GM12878 (cell line): ENCODE measurements at regions of chr2 and their contacts with region 1.

Region 1: GRCh38 chr2:179049546-179050311 is at the start of gene CCDC141:
- DNase-seq: peak; percentile 37
- ATAC-seq: peak; percentile 77
- H3K4me3 ChIP-seq: peak within 1 kb of the TSS; percentile 68
- H3K27ac ChIP-seq: peak within 1 kb of the TSS; percentile 69
- H3K4me1 ChIP-seq: peaks cover 31% of the 10 kb centered on the region
- H3K27me3 ChIP-seq: no peaks in the 10 kb centered on the region
- CTCF ChIP-seq: no peak
- EP300 ChIP-seq: 0 out of 4 replicates have a peak, but pooled peaks of 1 of the 2 experiments have one; percentile 15
- POLR2A ChIP-seq: peak; percentile 35; the same call in 1 of the 2 replicates
- RAD21 ChIP-seq: no peak
- polyA plus RNA-seq, gene CCDC141: 0.84 to 2.1 TPM

Region 2: GRCh38 chr2:179037807-179038206 is 11.9 kb before region 1 on chr2:
- CTCF ChIA-PET with region 1: interaction called, 22 read pairs
- POLR2A ChIA-PET with region 1: interaction called, 9 read pairs
- RAD21 ChIA-PET with region 1: interaction called, 14 read pairs
- SMC1A ChIA-PET with region 1: interaction called, 28 read pairs
- in situ Hi-C with region 1: no loop called
- intact Hi-C with region 1: no loop called
- DNase-seq: no peak
- ATAC-seq: peak; percentile 69
- H3K4me3 ChIP-seq: no peak overlapping the region
- H3K27ac ChIP-seq: no peak overlapping the region
- H3K4me1 ChIP-seq: peaks cover 19% of the 10 kb centered on the region
- H3K27me3 ChIP-seq: no peaks in the 10 kb centered on the region
- CTCF ChIP-seq: no peak
- EP300 ChIP-seq: no peak; a peak in 1 of 4 replicates
- POLR2A ChIP-seq: no peak
- RAD21 ChIP-seq: no peak

Region 3: DNA sequence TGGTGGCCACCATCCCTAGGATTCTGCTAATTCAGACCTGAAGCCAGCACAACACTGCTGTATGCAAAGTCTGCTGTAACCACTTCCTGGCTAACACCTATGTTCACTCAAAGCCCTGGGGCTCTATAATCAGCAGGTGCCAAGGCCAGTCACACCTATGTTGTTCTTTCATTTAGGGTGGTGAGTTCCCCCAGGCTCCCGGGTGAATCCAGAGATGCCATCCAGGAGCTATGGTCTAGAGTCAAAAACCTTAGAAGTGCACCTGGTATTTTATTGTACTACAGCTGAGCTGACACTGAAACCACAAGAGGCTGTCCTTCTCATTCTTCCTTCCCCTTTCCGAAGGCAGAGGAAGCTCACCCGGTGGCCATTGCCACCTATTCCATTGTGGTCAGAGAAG is 46.4 kb after region 1 on chr2:
- CTCF ChIA-PET with region 1: interaction called, 6 read pairs
- POLR2A ChIA-PET with region 1: interaction called, 8 read pairs
- RAD21 ChIA-PET with region 1: interaction called, 38 read pairs
- SMC1A ChIA-PET with region 1: interaction called, 9 read pairs
- in situ Hi-C with region 1: no loop called
- intact Hi-C with region 1: loop called (anchors 5 kb)
- DNase-seq: peak; percentile 40
- ATAC-seq: peak; percentile 93
- H3K4me3 ChIP-seq: no peak overlapping the region
- H3K27ac ChIP-seq: 0 out of 2 replicates have a peak overlapping the region, but pooled peaks have one; percentile 23
- H3K4me1 ChIP-seq: peaks cover 19% of the 10 kb centered on the region
- H3K27me3 ChIP-seq: no peaks in the 10 kb centered on the region
- CTCF ChIP-seq: no peak
- EP300 ChIP-seq: peak; percentile 48 to 50; a peak in 2 of 4 replicates
- POLR2A ChIP-seq: no peak
- RAD21 ChIP-seq: no peak